ENCODE measurements at regions of chr1 and their contacts with region 1.

Region 1: GRCh38 chr1:212782422-212783154 is 9.0 kb downstream of the NSL1 start:
- DNase-seq: peak in 1 of 5 donors; percentile 40
- ATAC-seq: peak in 2 of 4 donors; percentile 38 to 54
- H3K4me3 ChIP-seq: no peak overlapping the region
- H3K27ac ChIP-seq: peak overlapping the region in 1 of 12 donors; percentile 71
- H3K4me1 ChIP-seq: peaks cover 0 to 28% (median 0%) of the 10 kb centered on the region in 12 donors
- H3K27me3 ChIP-seq: no peaks in the 10 kb centered on the region
- CTCF ChIP-seq: peak; percentile 47 to 70 (median 58)
- POLR2A ChIP-seq: no peak

Region 2: DNA sequence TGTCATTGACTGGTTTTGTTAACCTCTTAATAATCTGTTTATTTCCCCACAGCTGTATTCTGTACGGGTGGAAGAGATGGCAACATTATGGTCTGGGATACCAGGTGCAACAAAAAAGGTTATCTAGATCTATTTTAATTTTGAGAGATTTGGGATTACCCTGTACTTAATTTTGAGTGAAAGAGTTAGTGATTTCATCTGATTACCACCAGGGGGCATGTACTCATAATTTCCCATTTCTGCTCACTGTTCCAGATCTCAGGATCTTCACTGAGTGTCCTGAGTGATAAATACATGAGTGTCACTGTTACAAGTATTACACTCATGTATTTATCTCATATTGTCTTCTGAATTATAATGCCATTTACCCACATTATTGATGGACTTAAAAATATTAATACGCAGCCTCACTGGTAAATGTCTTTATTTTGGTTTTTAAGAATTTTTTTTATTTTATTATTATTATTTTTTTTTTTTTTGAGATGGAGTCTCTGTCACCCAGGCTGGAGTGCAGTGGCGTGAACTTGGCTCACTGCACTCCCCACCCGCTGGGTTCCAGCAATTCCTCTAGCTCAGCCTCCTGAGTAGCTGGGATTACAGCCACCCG is 719.7 kb before region 1 on chr1:
- intact Hi-C with region 1: loop called in 1 of 10 experiments (anchors 10 kb)
- DNase-seq: no peak
- ATAC-seq: peak in 3 of 4 donors; percentile 39 to 51 (median 47)
- H3K4me3 ChIP-seq: no peak overlapping the region
- H3K27ac ChIP-seq: no peak overlapping the region
- H3K4me1 ChIP-seq: peaks cover 0 to 7% (median 0%) of the 10 kb centered on the region in 12 donors
- H3K27me3 ChIP-seq: no peaks in the 10 kb centered on the region
- CTCF ChIP-seq: peak; percentile 56 to 77 (median 69)
- POLR2A ChIP-seq: no peak

Region 3: DNA sequence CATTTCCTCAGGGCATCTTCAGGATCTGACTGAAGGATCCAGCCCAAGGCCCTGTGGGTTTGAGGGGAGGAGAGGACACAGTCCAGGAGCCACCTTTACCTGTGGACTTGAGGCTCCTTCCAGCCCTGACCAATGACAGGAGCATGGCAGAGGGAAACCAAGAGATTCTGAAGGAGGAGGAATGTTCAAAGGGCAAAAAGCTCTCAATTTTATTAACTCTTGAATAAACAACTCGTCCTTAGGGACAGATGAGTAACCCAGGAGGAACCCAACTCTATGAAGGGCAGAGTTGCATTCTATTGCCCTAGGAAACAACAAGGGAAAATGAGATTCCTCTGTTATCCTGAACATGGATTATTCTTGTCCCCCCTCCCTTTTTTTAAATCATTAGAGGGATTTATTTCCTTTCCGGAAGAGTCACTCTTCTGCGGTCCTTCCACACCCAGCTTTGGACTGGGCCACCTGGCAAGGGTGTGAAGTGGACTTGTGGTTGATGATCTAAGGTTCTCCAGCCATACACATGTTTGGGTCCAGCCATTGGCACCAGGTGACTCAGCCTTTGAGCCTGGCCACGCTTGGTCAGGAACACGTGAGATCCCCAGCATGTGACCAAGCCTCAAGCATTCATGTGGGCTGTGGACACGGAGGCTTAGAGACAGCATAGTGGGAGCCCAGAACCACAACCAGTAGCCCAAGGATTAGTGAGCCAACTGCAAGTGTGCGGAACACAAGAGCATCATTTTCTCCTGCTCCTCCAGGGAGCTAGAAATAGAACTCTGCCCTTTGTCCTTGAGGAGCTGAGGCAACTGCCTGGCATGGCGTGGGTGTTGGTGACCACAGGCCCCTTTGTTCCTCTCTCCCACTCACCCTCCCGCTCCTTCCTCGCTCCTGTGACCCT is 300.0 kb before region 1 on chr1:
- intact Hi-C with region 1: loop called in 8 of 10 experiments (anchors 2 to 10 kb)
- DNase-seq: no peak
- ATAC-seq: no peak
- H3K4me3 ChIP-seq: no peak overlapping the region
- H3K27ac ChIP-seq: no peak overlapping the region
- H3K4me1 ChIP-seq: peaks cover 0 to 16% (median 0%) of the 10 kb centered on the region in 12 donors
- H3K27me3 ChIP-seq: no peaks in the 10 kb centered on the region
- CTCF ChIP-seq: no peak
- POLR2A ChIP-seq: no peak

Region 4: GRCh38 chr1:212678456-212679410 is 103.9 kb before region 1 on chr1:
- intact Hi-C with region 1: no loop called
- DNase-seq: no peak
- ATAC-seq: peak in 1 of 4 donors; percentile 22
- H3K4me3 ChIP-seq: no peak overlapping the region
- H3K27ac ChIP-seq: no peak overlapping the region
- H3K4me1 ChIP-seq: peaks cover 0 to 31% (median 0%) of the 10 kb centered on the region in 12 donors
- H3K27me3 ChIP-seq: peaks cover 0 to 3% (median 0%) of the 10 kb centered on the region in 9 donors
- CTCF ChIP-seq: no peak
- POLR2A ChIP-seq: no peak

Region 5: DNA sequence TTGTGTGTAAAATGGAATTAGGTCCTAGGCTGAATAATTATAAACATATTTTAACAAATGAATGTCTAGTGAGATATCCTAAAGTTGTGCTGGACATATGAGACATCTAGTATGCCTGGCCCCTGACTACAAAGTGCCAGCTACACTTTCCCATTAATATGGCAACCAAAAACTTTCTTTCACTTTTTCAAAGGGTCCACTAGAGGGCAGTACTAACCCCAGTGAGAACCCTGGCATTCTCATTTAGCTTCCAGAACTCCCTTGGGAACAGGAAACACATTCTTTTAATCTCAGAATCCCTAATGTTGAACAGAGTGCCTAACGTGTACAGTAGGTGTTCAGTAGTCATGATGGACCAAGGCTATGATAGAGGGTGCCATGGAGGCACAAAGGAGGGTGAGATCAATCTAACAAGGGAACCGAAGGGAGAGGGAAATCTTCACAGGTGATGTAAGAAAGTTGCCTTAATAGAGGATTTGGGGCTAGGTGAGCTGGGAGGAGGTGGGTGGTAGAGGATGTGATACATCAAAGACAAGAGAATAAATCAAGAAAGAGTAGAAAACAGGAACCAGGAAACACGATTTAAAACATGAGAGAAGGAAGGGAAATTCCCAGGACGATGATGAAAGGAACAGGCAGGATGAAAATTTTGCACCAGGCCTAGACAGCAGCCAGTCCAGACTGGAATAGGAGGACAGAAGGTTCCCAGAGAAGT is 32.6 kb before region 1 on chr1:
- intact Hi-C with region 1: loop called in 1 of 10 experiments (anchors 2 kb)
- DNase-seq: no peak
- ATAC-seq: peak in 1 of 4 donors; percentile 55
- H3K4me3 ChIP-seq: no peak overlapping the region
- H3K27ac ChIP-seq: peak overlapping the region in 2 of 12 donors; percentile 9 to 17
- H3K4me1 ChIP-seq: peaks cover 0 to 54% (median 14%) of the 10 kb centered on the region in 12 donors
- H3K27me3 ChIP-seq: no peaks in the 10 kb centered on the region
- CTCF ChIP-seq: peak; percentile 50 to 79 (median 68)
- POLR2A ChIP-seq: no peak